CD4-positive, alpha-beta memory T cell (primary cell): ENCODE measurements at regions of chr18 and their contacts with region 1.

Region 1: GRCh38 chr18:839224-840022 is 27.4 kb upstream of the YES1 start:
- DNase-seq: peak; percentile 67 to 75 (median 72)
- H3K4me3 ChIP-seq: no peak overlapping the region
- H3K4me3 Mint-ChIP-seq: no peak overlapping the region
- H3K27ac ChIP-seq: no peak overlapping the region
- H3K27ac Mint-ChIP-seq: no peak overlapping the region
- H3K4me1 ChIP-seq: no peaks in the 10 kb centered on the region
- H3K4me1 Mint-ChIP-seq: peaks cover 0 to 6% (median 0%) of the 10 kb centered on the region in 4 donors
- H3K27me3 ChIP-seq: no peaks in the 10 kb centered on the region
- H3K27me3 Mint-ChIP-seq: peaks cover 2 to 8% of the 10 kb centered on the region in 2 donors

Region 2: GRCh38 chr18:623761-624620 is 215.4 kb before region 1 on chr18:
- CTCF ChIA-PET with region 1: interaction called, 38 read pairs
- POLR2A ChIA-PET with region 1: no interaction called
- intact Hi-C with region 1: loop called (anchors 1 kb)
- DNase-seq: peak; percentile 30 to 58 (median 44)
- H3K4me3 ChIP-seq: no peak overlapping the region
- H3K4me3 Mint-ChIP-seq: no peak overlapping the region
- H3K27ac ChIP-seq: no peak overlapping the region
- H3K27ac Mint-ChIP-seq: no peak overlapping the region
- H3K4me1 ChIP-seq: no peaks in the 10 kb centered on the region
- H3K4me1 Mint-ChIP-seq: peaks cover 0 to 2% (median 0%) of the 10 kb centered on the region in 4 donors
- H3K27me3 ChIP-seq: no peaks in the 10 kb centered on the region
- H3K27me3 Mint-ChIP-seq: peaks cover 3 to 26% of the 10 kb centered on the region in 2 donors

Region 3: DNA sequence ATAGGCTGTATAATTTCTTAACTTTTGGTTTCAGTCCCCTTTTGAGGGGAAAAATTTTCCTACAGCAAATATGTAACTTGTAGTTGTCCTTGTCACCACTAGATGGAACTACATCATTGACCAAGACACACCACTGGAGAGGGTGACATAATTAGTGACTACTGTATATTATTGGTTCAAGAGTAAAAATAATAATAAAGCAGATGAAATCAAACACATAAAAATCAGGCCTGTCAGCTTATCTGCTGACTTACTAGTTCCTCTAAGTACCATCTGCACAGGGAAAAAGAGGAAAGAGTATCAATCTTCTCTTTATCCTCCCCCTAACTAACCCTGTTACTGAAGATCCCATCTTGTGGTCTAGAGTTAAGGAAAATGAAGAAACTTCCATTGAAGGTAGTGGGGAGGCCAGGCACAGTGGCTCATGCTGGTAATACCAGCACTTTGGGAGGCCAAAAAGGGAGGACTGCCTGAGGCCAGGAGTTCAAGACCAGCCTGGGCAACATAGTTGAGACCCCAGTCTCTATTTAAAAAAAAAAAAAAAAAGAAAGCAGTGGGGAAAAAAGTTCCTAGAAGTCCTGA is 97.4 kb before region 1 on chr18:
- CTCF ChIA-PET with region 1: interaction called, 589 read pairs
- POLR2A ChIA-PET with region 1: no interaction called
- intact Hi-C with region 1: loop called (anchors 1 kb)
- DNase-seq: peak in 4 of 5 donors; percentile 45 to 53 (median 50)
- H3K4me3 ChIP-seq: no peak overlapping the region
- H3K4me3 Mint-ChIP-seq: no peak overlapping the region
- H3K27ac ChIP-seq: no peak overlapping the region
- H3K27ac Mint-ChIP-seq: no peak overlapping the region
- H3K4me1 ChIP-seq: no peaks in the 10 kb centered on the region
- H3K4me1 Mint-ChIP-seq: peaks cover 0 to 2% (median 1%) of the 10 kb centered on the region in 4 donors
- H3K27me3 ChIP-seq: no peaks in the 10 kb centered on the region
- H3K27me3 Mint-ChIP-seq: no peaks in the 10 kb centered on the region

Region 4: GRCh38 chr18:750456-750855 is 89.0 kb before region 1 on chr18:
- CTCF ChIA-PET with region 1: interaction called, 589 read pairs
- POLR2A ChIA-PET with region 1: no interaction called
- intact Hi-C with region 1: no loop called
- DNase-seq: no peak
- H3K4me3 ChIP-seq: no peak overlapping the region
- H3K4me3 Mint-ChIP-seq: no peak overlapping the region
- H3K27ac ChIP-seq: no peak overlapping the region
- H3K27ac Mint-ChIP-seq: no peak overlapping the region
- H3K4me1 ChIP-seq: no peaks in the 10 kb centered on the region
- H3K4me1 Mint-ChIP-seq: no peaks in the 10 kb centered on the region
- H3K27me3 ChIP-seq: no peaks in the 10 kb centered on the region
- H3K27me3 Mint-ChIP-seq: no peaks in the 10 kb centered on the region

Region 5: GRCh38 chr18:770575-770960 is 68.9 kb before region 1 on chr18:
- CTCF ChIA-PET with region 1: interaction called, 10 read pairs
- POLR2A ChIA-PET with region 1: no interaction called
- intact Hi-C with region 1: no loop called
- DNase-seq: no peak
- H3K4me3 ChIP-seq: no peak overlapping the region
- H3K4me3 Mint-ChIP-seq: no peak overlapping the region
- H3K27ac ChIP-seq: no peak overlapping the region
- H3K27ac Mint-ChIP-seq: peak overlapping the region in 2 of 7 donors; percentile 5 to 46
- H3K4me1 ChIP-seq: no peaks in the 10 kb centered on the region
- H3K4me1 Mint-ChIP-seq: peaks cover 5 to 17% (median 13%) of the 10 kb centered on the region in 4 donors
- H3K27me3 ChIP-seq: no peaks in the 10 kb centered on the region
- H3K27me3 Mint-ChIP-seq: no peaks in the 10 kb centered on the region

Region 6: DNA sequence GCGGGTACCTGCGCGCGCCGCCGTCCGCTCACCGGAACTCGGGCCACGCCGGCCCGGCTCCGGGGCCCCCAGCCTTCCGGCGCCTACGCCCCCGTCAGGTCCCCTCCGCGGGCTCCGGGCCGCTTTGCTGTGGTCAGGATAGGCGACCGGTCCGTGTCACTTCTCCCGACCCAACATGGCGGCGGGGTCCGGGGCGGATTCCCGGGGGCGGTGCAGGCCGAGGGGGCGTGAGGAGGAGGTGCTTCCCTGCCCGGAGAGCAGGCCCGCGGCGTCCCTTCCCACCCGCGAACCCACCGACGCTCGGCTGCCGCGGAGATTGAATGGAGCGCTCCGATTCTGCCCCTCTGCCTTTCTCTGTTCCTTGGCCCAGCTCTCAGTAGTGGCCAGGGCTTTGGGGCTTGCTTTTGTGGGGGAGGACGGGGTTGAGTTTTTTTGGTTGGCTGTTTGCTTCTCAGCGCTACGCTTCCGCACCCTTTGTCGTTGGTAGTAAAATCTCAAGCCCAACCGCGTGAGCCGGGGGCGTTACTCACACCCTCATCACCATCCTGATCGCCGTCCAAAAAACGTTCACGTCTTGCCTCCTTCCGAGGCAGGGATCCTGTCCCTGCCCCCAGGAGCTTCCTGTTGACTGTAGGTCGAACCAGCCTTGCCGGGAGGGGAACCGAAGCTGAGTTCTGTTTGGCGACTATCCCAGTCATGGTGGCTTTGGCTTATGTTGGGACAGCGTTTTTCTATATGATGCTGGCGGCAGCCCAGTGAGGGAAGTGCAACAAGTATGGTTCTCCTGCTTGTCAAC is 26.8 kb before region 1 on chr18:
- CTCF ChIA-PET with region 1: interaction called, 13 read pairs
- POLR2A ChIA-PET with region 1: no interaction called
- intact Hi-C with region 1: no loop called
- DNase-seq: peak; percentile 80 to 86 (median 81)
- H3K4me3 ChIP-seq: peak overlapping the region; percentile 64 to 76
- H3K4me3 Mint-ChIP-seq: peak overlapping the region; percentile 83 to 97 (median 94)
- H3K27ac ChIP-seq: peak overlapping the region; percentile 80
- H3K27ac Mint-ChIP-seq: peak overlapping the region; percentile 97 to 99 (median 98)
- H3K4me1 ChIP-seq: peaks cover 58% of the 10 kb centered on the region
- H3K4me1 Mint-ChIP-seq: peaks cover 40 to 58% (median 50%) of the 10 kb centered on the region in 4 donors
- H3K27me3 ChIP-seq: no peaks in the 10 kb centered on the region
- H3K27me3 Mint-ChIP-seq: peaks cover 0 to 5% of the 10 kb centered on the region in 2 donors

Region 7: DNA sequence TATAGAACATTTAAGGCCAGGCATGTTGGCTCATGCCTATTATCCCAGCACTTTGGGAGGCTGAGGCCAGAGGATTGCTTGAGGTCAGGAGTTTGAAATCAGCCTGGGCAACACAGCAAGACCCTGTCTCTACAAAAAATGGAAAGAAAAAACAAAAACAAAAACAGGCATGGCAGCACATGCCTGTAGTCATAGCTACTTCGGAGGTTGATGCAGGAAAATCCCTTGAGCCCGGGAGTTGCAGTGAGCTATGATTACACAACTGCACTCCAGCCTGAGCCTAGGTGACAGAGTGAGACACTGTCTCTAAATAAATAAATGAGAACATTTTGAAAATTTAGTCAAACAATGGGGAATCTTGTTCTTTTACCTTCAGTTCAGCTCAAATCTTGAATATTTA is 15.2 kb before region 1 on chr18:
- CTCF ChIA-PET with region 1: interaction called, 94 read pairs
- POLR2A ChIA-PET with region 1: no interaction called
- intact Hi-C with region 1: no loop called
- DNase-seq: no peak
- H3K4me3 ChIP-seq: no peak overlapping the region
- H3K4me3 Mint-ChIP-seq: no peak overlapping the region
- H3K27ac ChIP-seq: no peak overlapping the region
- H3K27ac Mint-ChIP-seq: no peak overlapping the region
- H3K4me1 ChIP-seq: no peaks in the 10 kb centered on the region
- H3K4me1 Mint-ChIP-seq: peaks cover 0 to 4% (median 2%) of the 10 kb centered on the region in 4 donors
- H3K27me3 ChIP-seq: no peaks in the 10 kb centered on the region
- H3K27me3 Mint-ChIP-seq: peaks cover 0 to 1% of the 10 kb centered on the region in 2 donors